ENCODE measurements at regions of chrX and their contacts with region 1.

Region 1: DNA sequence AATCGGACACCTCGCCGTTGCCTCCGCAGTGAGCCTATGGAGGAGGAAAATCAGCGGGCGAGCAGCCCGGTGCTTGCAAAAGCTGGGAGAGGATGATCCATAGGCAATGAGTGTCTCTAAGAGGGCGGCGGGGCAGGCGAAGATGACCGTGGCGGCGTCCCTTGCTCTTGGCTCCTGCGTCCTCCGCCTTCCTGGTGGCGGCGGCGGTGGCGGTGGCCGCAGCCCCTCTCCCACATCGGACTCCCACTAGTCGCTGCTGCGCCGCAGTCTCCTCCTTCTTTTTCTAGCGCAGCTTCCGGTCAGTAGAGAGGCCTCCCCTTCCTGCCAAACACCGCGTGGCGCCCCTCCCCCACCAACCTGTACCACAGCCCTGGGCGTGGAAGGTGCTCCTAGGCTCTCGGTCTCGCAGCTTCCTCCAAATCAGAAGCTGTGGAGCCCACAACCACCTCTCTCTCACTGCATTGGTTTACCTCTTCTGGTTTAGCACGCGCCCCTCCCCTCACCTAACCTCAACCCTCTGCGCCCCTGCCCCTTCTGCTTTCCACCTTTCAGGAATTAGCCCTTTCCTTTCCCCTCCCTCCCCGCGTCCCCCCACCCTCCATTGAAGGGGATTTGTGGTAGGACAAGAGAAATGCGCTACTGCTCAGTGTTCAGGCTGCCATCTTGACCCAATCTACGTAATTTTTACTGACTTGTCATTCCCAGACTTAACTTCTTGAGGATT is at the start of gene SPIN3:
- DNase-seq: peak; percentile 81
- H3K4me3 Mint-ChIP-seq: peak within 1 kb of the TSS; percentile 83
- H3K27ac Mint-ChIP-seq: peak within 1 kb of the TSS; percentile 87
- H3K4me1 Mint-ChIP-seq: peaks cover 39% of the 10 kb centered on the region
- H3K27me3 Mint-ChIP-seq: no peaks in the 10 kb centered on the region
- total RNA-seq, gene SPIN3: 7.6 to 8.0 TPM

Region 2: GRCh38 chrX:56029691-56030090 is 965.7 kb before region 1 on chrX:
- CTCF ChIA-PET with region 1: no interaction called
- POLR2A ChIA-PET with region 1: no interaction called
- intact Hi-C with region 1: no loop called
- DNase-seq: no peak
- H3K4me3 Mint-ChIP-seq: no peak overlapping the region
- H3K27ac Mint-ChIP-seq: no peak overlapping the region
- H3K4me1 Mint-ChIP-seq: no peaks in the 10 kb centered on the region
- H3K27me3 Mint-ChIP-seq: no peaks in the 10 kb centered on the region

Region 3: DNA sequence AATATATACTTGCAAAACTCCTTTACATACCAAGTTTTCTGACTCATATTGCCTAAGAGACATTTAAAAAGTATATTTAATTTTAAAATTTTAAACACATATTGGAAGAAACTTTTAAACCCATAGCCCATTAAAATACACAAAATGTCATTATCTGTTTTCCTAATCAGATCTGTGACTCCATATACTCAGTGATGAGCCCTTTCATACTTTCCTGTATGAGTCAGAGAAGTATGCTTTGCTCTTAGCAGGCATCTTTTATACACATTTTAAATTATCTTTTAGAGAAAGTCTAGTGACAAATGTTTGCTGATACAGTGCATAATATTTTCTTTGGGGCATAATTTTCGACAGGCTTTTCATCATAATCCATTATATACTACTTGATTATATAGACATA is 26.5 kb before region 1 on chrX:
- CTCF ChIA-PET with region 1: no interaction called
- POLR2A ChIA-PET with region 1: no interaction called
- intact Hi-C with region 1: loop called (anchors 2 kb)
- DNase-seq: no peak
- H3K4me3 Mint-ChIP-seq: no peak overlapping the region
- H3K27ac Mint-ChIP-seq: no peak overlapping the region
- H3K4me1 Mint-ChIP-seq: peaks cover 4% of the 10 kb centered on the region
- H3K27me3 Mint-ChIP-seq: no peaks in the 10 kb centered on the region

Region 4: DNA sequence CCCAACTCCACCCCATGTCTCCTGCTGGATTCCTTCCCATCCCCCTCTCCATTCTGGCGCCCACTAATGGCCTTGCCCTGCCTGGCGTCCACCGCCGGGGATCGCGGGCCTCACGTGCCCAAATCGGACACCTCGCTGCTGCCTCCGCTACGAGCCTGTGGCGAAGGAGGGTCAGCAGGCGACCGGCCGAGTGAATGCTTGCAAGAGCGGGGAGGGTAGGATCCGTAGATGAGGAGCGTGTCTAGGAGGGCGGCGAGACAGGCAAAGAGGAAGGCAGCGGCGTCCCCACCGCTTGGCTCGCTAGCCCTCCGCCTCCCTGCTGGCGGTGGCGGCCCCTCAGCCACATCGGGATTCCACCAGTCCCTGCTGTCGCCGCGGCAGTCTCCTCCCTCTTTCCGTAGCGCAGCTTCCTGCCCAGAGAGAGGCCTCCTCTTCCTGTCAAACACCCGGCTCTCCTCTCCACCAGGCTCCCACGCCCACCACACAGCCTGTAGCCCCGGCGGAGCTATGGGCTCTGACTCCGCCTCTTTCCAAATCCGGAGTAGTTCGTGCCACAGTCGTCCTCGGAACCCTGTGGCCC is 125.8 kb after region 1 on chrX and contains the start of gene SPIN2B:
- CTCF ChIA-PET with region 1: no interaction called
- POLR2A ChIA-PET with region 1: no interaction called
- intact Hi-C with region 1: loop called (anchors 1 kb)
- DNase-seq: peak; percentile 90
- H3K4me3 Mint-ChIP-seq: peak within 1 kb of the TSS; percentile 84
- H3K27ac Mint-ChIP-seq: peak within 1 kb of the TSS; percentile 86
- H3K4me1 Mint-ChIP-seq: peaks cover 5% of the 10 kb centered on the region
- H3K27me3 Mint-ChIP-seq: no peaks in the 10 kb centered on the region
- total RNA-seq, gene SPIN2B: 5.1 to 7.7 TPM

Region 5: GRCh38 chrX:57453901-57454300 is 458.5 kb after region 1 on chrX:
- CTCF ChIA-PET with region 1: no interaction called
- POLR2A ChIA-PET with region 1: no interaction called
- intact Hi-C with region 1: no loop called
- DNase-seq: peak; percentile 13
- H3K4me3 Mint-ChIP-seq: no peak overlapping the region
- H3K27ac Mint-ChIP-seq: peak overlapping the region; percentile 38
- H3K4me1 Mint-ChIP-seq: no peaks in the 10 kb centered on the region
- H3K27me3 Mint-ChIP-seq: no peaks in the 10 kb centered on the region